ENCODE measurements at regions of chr17 and their contacts with region 1.

Region 1: DNA sequence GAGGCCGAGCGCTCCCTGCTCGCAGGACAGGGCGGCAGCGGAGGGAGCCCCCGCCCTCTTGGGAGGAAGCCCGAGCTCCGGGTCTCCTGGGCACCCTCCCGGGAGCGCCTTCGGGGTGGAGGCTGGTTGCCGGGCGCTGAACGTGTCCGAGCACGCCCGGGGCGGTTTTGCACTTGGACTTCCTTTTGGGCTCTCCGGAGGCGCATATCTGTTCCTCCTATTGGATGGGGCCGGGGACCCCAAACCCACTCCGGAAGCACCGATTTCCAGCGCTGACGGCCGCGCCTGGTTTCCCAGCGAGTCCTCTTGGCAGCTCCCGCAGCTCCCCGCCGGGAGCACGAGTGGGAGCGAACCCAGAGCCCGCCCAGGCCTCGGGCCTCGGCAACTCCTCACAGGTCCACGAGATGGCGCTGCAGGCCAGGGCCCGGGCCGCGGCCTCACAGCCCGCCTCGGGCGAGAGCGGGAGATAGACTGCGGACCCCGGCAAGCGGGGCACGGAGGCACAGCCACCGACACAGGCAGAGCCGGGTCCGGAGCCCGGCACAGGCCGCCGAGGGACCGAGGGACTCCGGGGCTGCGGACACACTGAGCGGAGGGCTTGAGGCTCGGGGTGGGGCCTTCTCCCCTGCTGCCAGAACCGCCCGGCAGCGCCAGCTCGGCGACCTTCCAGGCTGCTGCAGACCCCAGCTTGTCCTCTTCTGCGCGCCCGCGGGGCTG is 12.7 kb downstream of the TBX2 start:
- DNase-seq: peak; percentile 62 to 78
- ATAC-seq: peak; percentile 77

Region 2: DNA sequence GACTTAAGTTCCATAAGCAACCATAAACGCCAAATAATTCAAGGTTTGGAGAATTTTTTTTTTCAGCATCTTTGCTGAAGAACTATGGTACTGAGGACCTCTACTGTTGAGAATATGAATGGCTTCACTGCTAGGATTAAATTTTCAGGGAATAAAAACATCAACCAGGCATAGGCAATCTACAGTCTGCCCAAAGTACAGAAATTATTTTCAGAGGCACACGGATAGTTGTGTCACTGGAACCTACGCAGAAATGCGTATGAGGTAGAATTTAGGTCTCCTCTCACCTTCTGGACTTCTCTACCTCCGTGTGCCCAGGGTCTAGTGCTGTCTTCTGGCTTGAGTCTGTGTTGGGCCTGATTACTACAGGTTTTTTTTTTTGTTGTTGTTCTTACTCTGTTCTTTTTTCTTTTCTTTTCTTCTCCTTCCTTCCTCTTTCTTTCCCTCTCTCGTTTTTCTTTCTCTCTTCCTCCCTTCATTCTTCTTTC is 139.0 kb after region 1 on chr17:
- intact Hi-C with region 1: loop called (anchors 5 to 10 kb)
- DNase-seq: no peak
- ATAC-seq: peak; percentile 53

Region 3: GRCh38 chr17:61837175-61838051 is 425.1 kb after region 1 on chr17:
- intact Hi-C with region 1: loop called in 1 of 2 experiments (anchors 10 kb)
- DNase-seq: peak; percentile 26 to 77
- ATAC-seq: peak; percentile 78

Measured in left colon (tissue), 2 donors.